Activated CD4-positive, alpha-beta T cell treated with anti-CD3 and anti-CD28 coated beads, Interleukin-2, amount 10 ng/mL, durations not matched to agents 24 days and 14 days (primary cell): ENCODE measurements at regions of chr17 and their contacts with region 1.

Region 1: DNA sequence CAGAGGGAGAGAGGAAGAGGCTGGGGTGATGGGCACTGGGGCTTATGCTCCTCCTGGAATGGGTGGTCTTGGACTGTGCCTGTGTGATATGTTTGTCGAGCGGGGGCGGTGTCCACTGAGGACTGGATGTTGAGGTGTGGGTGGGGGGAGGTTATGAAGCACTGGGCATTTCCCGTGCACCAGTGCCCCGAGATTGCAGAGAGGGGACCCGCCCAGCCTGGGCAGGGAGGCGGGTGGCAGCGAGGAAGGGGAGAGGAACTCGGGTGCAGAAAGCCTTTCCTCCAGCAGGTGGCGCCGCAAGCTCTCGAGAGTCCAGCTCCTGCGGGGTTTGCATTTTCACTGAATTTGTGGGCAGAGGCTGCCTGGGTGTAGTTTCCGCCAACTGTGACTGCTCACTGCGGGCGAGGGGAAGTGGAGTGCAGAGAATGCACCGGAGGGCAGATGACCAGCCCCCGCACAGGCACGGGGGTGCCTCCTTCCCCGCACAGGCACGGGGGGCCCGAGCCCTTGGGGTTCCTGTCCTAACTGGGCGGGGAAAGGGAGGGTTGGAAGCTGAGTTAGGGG is 190.6 kb downstream of the SEC14L1 start:
- DNase-seq: peak; percentile 98
- H3K4me3 Mint-ChIP-seq: peak overlapping the region; percentile 84
- H3K27ac Mint-ChIP-seq: peak overlapping the region; percentile 94
- H3K4me1 Mint-ChIP-seq: peaks cover 40% of the 10 kb centered on the region
- H3K27me3 Mint-ChIP-seq: no peaks in the 10 kb centered on the region

Region 2: DNA sequence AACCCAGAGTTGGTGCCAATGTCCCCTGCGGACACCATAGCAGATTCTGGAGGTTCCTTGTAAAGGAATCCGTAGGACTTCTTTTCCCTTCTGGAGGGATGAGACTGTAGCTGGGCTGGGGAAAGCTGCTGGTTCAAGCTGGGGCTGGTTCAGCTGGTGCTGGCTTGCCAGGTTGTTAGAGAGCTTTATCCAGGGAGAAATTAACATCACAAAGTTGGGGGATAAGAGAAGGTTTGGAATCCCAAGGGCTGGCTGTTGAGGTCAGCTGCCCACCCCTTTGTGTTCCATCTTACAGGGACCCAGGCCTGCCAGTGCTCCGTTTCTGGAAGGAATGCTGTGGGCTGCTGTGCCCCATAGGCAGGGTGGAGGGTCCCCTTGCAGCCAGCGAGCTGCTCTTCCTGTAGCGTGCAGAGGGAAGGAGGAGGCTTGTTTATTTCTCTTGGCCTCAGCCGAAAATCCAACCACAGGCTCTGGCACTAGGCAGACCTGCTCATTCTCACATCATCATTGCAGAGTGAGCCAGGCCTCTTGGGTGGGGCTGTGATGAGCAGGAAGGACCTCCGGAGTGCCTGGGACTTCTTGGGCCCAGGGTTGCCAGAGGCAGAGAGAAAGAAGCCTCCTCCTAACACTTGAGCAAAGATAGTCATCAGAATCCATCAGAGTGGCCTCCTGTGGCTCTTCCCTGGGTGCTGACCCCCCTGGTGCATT is 60.4 kb after region 1 on chr17:
- intact Hi-C with region 1: loop called (anchors 2 kb)
- DNase-seq: peak; percentile 88
- H3K4me3 Mint-ChIP-seq: peak overlapping the region; percentile 87
- H3K27ac Mint-ChIP-seq: peak overlapping the region; percentile 90
- H3K4me1 Mint-ChIP-seq: peaks cover 74% of the 10 kb centered on the region
- H3K27me3 Mint-ChIP-seq: no peaks in the 10 kb centered on the region

Region 3: GRCh38 chr17:77429919-77430752 is 98.8 kb after region 1 on chr17:
- intact Hi-C with region 1: loop called (anchors 2 kb)
- DNase-seq: peak; percentile 94
- H3K4me3 Mint-ChIP-seq: peak overlapping the region; percentile 35
- H3K27ac Mint-ChIP-seq: peak overlapping the region; percentile 62
- H3K4me1 Mint-ChIP-seq: peaks cover 72% of the 10 kb centered on the region
- H3K27me3 Mint-ChIP-seq: no peaks in the 10 kb centered on the region

Region 4: DNA sequence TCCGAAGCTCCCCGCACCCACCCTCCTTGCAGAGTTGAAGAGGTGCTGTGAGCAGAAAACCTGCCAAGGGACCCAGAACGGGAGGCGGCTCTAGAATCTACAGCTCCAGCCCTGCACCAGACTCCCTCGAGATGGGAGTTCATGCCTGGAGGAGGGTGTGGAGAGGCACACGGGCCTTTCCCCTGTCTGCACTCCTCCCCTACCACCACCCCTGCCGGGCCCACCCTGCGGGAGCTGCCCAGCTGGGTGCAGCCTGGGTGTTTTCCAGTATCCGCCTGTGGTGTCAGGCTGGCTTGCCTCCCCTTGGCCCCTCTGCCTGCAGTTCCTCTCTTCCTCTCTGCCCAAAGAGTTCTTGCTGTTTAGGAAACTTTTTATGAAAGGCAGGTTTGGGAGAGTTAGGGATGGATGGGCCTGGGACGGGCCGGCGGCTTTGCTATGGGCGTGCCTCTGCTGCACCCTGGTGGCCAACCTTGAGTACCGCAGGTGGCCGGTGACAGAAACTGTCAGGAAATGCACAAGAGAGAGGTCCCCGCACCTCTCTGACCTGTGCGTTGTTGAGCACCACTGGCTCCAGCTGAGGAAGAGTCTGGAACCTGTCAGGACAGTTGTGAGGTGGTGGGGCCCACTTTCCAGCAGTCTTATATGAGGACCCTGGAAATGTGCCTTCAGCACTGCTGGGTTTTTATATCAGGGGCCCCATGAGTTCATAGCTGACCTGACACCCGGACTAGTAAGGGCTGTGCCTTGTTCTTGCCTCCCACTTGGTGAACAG is 163.5 kb after region 1 on chr17:
- intact Hi-C with region 1: loop called (anchors 1 kb)
- DNase-seq: peak; percentile 91
- H3K4me3 Mint-ChIP-seq: no peak overlapping the region
- H3K27ac Mint-ChIP-seq: peak overlapping the region; percentile 76
- H3K4me1 Mint-ChIP-seq: peaks cover 20% of the 10 kb centered on the region
- H3K27me3 Mint-ChIP-seq: no peaks in the 10 kb centered on the region